ENCODE measurements at regions of chr15 and their contacts with region 1.

Region 1: GRCh38 chr15:56886932-56887781 is 31.3 kb upstream of the TCF12 start:
- DNase-seq: peak; percentile 92 to 95
- H3K4me3 ChIP-seq: peak overlapping the region; percentile 46 to 70
- H3K27ac ChIP-seq: peak overlapping the region; percentile 96 to 99
- H3K4me1 ChIP-seq: no peaks in the 10 kb centered on the region
- H3K27me3 ChIP-seq: no peaks in the 10 kb centered on the region
- CTCF ChIP-seq: peak; percentile 3 to 24 (median 18)
- POLR2A ChIP-seq: peak; percentile 29 to 81

Region 2: DNA sequence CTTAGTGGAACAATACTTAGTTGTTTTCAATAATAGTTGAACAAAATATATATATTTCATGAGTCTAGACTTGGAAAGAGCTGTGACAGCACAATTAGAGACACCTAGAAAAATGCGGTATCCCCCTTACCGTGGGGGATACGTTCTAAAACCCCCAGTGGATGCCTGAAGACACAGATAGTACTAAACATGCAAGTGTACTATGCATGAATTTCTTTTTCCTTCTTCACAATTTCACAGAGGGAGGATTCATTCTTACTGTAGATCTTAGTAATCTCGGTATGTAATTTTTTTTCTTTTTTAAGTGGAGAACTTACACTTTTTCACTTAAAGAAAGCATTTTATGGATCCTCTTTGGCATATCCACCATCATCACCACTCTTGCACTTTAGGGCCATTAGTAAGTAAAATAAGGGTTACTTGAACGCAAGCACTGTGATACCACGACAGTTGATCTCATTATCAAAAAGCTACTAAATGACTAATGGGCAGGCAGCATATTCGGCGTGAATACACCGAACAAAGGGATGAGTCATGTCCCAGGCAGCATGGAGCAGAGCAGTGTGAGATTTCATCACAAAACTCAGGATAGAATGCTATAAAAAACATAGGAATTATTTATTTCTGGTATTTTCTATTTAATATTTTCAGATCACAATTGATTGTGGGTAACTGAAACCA is 81.6 kb before region 1 on chr15:
- intact Hi-C with region 1: no loop called
- DNase-seq: peak; percentile 27 to 59
- H3K4me3 ChIP-seq: peak overlapping the region; percentile 13 to 18
- H3K27ac ChIP-seq: peak overlapping the region; percentile 27 to 68
- H3K4me1 ChIP-seq: no peaks in the 10 kb centered on the region
- H3K27me3 ChIP-seq: no peaks in the 10 kb centered on the region
- CTCF ChIP-seq: no peak
- POLR2A ChIP-seq: no peak

Region 3: GRCh38 chr15:56918046-56918938 is 31.1 kb after region 1 on chr15 and contains the start of gene TCF12:
- intact Hi-C with region 1: loop called (anchors 1 kb)
- DNase-seq: peak; percentile 93 to 96
- H3K4me3 ChIP-seq: peak within 1 kb of the TSS; percentile 76 to 90
- H3K27ac ChIP-seq: peak within 1 kb of the TSS; percentile 92 to 97
- H3K4me1 ChIP-seq: peaks cover 0 to 13% of the 10 kb centered on the region in 2 donors
- H3K27me3 ChIP-seq: no peaks in the 10 kb centered on the region
- CTCF ChIP-seq: peak; percentile 24 to 52 (median 43)
- POLR2A ChIP-seq: peak; percentile 51 to 79
- total RNA-seq, gene TCF12: 109 to 361 (median 196) TPM

Measured in uterus (tissue), 4 donors.